Esophagus muscularis mucosa (tissue), 4 donors: ENCODE measurements at regions of chr5 and their contacts with region 1.

Region 1: GRCh38 chr5:173331956-173332479 is 3.8 kb upstream of the STC2 start:
- DNase-seq: no peak
- H3K4me3 ChIP-seq: no peak overlapping the region
- H3K27ac ChIP-seq: no peak overlapping the region
- H3K4me1 ChIP-seq: peaks cover 27 to 44% (median 32%) of the 10 kb centered on the region in 4 donors
- H3K27me3 ChIP-seq: peaks cover 4 to 39% (median 9%) of the 10 kb centered on the region in 4 donors
- CTCF ChIP-seq: peak; percentile 97
- EP300 ChIP-seq: no peak
- POLR2A ChIP-seq: no peak

Region 2: DNA sequence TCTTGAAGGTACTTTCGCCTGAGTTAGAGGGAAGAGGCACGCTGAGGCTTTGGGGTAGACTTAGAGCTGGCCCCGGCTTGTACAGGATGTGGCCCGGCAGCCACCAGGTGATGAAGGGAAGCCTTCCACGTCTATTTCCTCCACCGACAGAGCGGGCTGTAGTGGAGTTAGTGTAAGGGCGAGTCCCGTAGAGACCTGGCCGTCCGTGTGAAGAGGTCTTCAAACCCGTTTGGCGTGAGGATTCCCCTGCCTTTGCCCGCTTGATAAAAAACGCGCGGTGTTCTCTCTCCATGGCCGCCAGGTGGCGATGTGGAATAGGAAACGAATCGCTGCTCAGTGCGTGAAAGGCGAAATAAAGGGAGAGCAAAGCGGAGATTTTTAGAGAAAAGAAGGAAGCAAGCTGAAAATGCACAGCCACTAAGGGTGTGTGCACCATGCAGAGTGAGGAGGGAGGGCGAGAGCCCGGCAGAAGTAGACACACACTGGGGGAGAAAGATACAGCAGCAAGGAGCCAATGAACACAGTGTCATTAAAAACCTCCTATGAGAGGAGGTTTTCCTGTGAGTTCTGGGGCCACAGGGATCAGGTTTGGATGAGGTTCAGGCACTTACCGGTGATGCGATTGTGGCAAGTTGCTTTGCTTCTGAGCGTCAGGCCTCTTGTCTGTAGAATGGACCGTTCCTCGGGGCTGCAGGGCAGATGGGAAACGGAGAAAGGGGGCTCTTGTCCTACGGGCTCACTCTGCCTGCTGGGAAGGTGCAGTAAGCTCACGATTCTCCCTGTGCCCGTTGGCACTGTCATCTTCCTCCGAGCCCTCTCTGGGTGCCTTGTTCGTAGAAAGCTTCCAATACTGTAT is 38.0 kb before region 1 on chr5:
- intact Hi-C with region 1: loop called (anchors 1 kb)
- DNase-seq: no peak
- H3K4me3 ChIP-seq: peak overlapping the region in 2 of 4 donors; percentile 22 to 25
- H3K27ac ChIP-seq: no peak overlapping the region
- H3K4me1 ChIP-seq: peaks cover 12 to 20% (median 19%) of the 10 kb centered on the region in 4 donors
- H3K27me3 ChIP-seq: peaks cover 0 to 9% (median 0%) of the 10 kb centered on the region in 4 donors
- CTCF ChIP-seq: peak; percentile 86 to 88 (median 87)
- EP300 ChIP-seq: no peak
- POLR2A ChIP-seq: no peak

Region 3: GRCh38 chr5:173472141-173472543 is 140.1 kb after region 1 on chr5:
- intact Hi-C with region 1: loop called (anchors 5 kb)
- DNase-seq: peak; percentile 96
- H3K4me3 ChIP-seq: no peak overlapping the region
- H3K27ac ChIP-seq: peak overlapping the region; percentile 83 to 94 (median 94)
- H3K4me1 ChIP-seq: peaks cover 30 to 87% (median 72%) of the 10 kb centered on the region in 4 donors
- H3K27me3 ChIP-seq: no peaks in the 10 kb centered on the region
- CTCF ChIP-seq: no peak
- EP300 ChIP-seq: peak; percentile 94
- POLR2A ChIP-seq: no peak